Right cardiac atrium (tissue), 5 donors: ENCODE measurements at regions of chr6 and their contacts with region 1.

Region 1: DNA sequence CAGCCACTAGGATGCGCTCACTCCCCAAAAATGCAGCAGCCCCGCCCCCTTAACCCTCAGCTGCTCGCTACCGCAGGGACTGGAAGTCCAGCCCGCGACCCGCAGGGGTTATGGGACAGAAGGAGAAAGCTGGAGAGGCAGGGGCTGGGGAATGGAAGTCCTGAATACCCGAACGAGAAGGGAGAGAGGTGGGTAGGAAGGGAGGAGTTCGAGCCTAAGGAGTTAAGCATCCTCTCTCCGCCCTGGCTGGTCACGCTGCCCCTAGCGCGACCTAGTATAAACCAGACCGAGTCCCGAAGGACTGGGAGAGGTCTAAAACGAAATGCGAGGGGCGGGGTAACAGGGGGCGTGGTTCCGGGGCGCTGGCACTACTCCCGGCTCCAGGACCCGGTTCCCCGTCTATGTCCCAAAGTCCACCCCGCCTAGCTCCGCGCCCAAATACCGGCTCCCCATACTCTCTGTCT is 448 bp upstream of the DDAH2 start:
- DNase-seq: peak; percentile 93 to 97 (median 97)
- ATAC-seq: peak; percentile 88 to 91
- H3K4me3 ChIP-seq: peak overlapping the region; percentile 81
- H3K27ac ChIP-seq: peak overlapping the region; percentile 95
- H3K4me1 ChIP-seq: peaks cover 4% of the 10 kb centered on the region
- H3K27me3 ChIP-seq: no peaks in the 10 kb centered on the region

Region 2: GRCh38 chr6:30877419-30878371 is 851.9 kb before region 1 on chr6:
- intact Hi-C with region 1: no loop called
- DNase-seq: peak; percentile 90 to 98 (median 94)
- ATAC-seq: peak; percentile 88 to 92
- H3K4me3 ChIP-seq: peak overlapping the region; percentile 46
- H3K27ac ChIP-seq: peak overlapping the region; percentile 91
- H3K4me1 ChIP-seq: peaks cover 5% of the 10 kb centered on the region
- H3K27me3 ChIP-seq: no peaks in the 10 kb centered on the region

Region 3: DNA sequence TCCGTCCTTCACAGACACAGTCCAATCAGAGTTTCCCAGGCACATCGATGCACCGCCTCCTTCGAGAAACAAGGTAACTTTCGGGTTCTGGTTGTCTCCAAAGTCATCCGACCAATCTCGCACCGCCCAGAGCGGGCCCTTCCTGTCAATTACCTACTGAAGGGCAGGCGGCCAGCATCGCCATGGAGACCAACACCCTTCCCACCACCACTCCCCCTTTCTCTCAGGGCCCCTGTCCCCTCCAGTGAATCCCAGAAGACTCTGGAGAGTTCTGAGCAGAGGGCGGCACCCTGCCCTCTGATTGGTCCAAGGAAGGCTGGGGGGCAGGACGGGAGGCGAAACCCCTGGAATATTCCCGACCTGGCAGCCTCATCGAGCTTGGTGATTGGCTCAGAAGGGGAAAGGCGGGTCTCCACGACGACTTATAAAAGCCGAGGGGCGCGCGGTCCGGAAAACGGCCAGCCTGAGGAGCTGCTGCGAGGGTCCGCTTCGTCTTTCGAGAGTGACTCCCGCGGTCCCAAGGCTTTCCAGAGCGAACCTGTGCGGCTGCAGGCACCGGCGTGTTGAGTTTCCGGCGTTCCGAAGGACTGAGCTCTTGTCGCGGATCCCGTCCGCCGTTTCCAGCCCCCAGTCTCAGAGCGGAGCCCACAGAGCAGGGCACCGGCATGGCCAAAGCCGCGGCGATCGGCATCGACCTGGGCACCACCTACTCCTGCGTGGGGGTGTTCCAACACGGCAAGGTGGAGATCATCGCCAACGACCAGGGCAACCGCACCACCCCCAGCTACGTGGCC is 97.9 kb after region 1 on chr6 and contains the start of gene HSPA1B:
- intact Hi-C with region 1: loop called in 3 of 4 experiments (anchors 2 to 10 kb)
- DNase-seq: peak; percentile 99 to 100 (median 100)
- ATAC-seq: peak; percentile 97
- H3K4me3 ChIP-seq: peak within 1 kb of the TSS; percentile 77
- H3K27ac ChIP-seq: peak within 1 kb of the TSS; percentile 99
- H3K4me1 ChIP-seq: peaks cover 5% of the 10 kb centered on the region
- H3K27me3 ChIP-seq: no peaks in the 10 kb centered on the region
- total RNA-seq, gene HSPA1B: 110 to 299 (median 197) TPM

Region 4: GRCh38 chr6:31834434-31835198 is 105.1 kb after region 1 on chr6:
- intact Hi-C with region 1: loop called in 2 of 4 experiments (anchors 10 kb)
- DNase-seq: peak; percentile 88 to 96 (median 95)
- ATAC-seq: peak; percentile 93 to 94
- H3K4me3 ChIP-seq: peak overlapping the region; percentile 98
- H3K27ac ChIP-seq: peak overlapping the region; percentile 99
- H3K4me1 ChIP-seq: peaks cover 8% of the 10 kb centered on the region
- H3K27me3 ChIP-seq: no peaks in the 10 kb centered on the region

Region 5: DNA sequence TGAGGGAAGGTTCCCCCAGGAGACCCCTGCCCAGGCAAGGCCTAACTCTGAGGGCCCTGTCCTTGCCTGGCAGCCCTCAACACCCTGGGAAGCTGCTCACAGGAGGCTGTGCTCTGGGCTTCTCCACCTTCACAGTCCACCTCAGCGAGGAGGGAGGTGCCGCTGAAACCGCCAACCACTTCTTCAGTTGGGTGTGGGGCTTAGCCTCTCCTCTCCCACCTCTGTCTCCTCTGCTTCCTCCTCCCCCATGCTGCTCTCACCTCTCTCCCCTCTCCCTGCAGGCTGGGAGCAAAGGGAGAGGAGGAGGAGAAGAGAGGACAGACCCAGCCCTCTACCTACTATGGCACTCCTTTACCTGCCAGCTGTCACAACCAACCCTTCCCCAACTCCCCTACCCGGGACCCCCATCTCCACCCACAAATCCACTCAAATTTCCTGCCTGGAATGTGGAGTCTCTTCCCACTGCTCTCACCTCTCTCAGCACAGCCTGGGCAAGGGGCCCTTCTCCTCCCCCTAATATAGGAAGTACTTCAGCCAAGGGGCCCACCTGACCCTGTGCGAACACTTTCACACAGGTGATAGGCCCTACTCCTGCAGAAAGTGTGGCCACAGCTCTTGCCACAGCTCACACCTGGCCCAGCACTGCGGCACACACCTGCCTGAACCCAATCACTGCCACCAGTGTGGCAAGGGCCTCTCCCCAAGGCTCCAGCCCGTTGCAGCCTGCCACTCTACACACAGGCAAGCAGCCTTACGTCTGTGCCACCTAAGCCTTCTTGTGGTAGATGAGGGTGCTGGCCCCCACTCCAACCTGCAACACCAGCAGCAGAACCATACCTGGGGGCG is 1485.9 kb after region 1 on chr6:
- intact Hi-C with region 1: no loop called
- DNase-seq: no peak
- ATAC-seq: no peak
- H3K4me3 ChIP-seq: no peak overlapping the region
- H3K27ac ChIP-seq: no peak overlapping the region
- H3K4me1 ChIP-seq: no peaks in the 10 kb centered on the region
- H3K27me3 ChIP-seq: no peaks in the 10 kb centered on the region